ENCODE measurements at regions of chr19 and their contacts with region 1.

Region 1: DNA sequence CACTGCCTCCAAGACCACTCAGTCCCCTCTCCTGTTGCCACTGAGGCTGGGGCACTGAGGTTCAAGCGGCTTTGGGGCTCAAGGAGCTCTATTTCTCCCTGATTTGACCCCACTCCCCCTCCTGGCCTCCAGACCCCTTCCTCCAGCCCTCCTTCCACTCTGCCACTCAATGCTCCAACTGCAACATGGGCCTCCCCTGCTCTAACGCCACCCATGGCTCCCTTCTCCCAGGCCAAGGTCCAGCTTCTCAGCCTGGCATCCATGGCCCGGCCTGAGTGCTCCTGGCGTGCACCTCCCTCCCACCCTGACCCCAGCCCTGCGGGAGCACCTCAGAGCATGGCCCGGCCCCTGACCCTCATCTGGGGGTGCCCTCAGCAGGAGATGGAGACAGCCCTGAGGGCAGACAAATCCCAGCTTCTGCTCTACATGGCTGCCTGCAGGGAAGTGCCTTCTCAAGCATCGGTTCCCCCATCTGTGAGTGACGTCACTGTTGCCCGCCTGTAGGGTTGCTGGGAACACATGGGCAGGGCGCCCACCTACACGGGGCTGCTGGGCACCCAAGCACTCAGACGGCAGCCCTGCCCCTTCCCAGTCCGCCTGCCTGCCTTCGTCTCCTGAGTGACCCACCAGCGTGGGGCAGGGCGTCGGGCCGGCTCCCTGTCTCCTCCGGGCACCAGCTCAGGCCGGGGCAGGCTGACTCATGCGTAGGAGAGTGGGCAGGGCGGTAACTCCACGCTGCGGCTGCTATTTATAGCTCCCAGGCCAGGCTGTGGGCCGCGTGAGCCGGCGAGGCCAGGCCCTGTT is 1.6 kb upstream of the DIRAS1 start:
- DNase-seq: peak; percentile 89

Region 2: GRCh38 chr19:2663920-2664571 is 58.7 kb before region 1 on chr19:
- intact Hi-C with region 1: loop called (anchors 2 kb)
- DNase-seq: peak; percentile 86

Region 3: DNA sequence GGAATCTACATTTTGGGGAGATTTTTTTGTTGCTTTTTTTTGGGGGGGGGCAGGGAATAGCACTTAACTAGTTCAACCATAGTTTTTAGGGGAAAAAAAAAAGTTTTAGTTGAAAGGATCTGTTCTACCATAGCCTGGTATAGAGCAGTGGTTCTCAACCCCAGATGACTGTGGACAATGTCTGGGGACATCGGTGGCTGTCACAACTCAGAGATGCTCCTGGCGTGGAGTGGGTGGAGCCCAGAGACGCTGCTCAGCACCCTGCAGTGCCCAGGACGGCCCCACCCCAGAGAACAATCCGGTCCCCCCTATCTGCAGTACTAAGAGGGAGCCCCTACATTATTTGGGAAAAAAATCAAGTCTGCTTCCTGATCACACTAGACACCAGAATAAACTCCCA is 28.5 kb before region 1 on chr19:
- intact Hi-C with region 1: loop called (anchors 2 kb)
- DNase-seq: no peak

Region 4: DNA sequence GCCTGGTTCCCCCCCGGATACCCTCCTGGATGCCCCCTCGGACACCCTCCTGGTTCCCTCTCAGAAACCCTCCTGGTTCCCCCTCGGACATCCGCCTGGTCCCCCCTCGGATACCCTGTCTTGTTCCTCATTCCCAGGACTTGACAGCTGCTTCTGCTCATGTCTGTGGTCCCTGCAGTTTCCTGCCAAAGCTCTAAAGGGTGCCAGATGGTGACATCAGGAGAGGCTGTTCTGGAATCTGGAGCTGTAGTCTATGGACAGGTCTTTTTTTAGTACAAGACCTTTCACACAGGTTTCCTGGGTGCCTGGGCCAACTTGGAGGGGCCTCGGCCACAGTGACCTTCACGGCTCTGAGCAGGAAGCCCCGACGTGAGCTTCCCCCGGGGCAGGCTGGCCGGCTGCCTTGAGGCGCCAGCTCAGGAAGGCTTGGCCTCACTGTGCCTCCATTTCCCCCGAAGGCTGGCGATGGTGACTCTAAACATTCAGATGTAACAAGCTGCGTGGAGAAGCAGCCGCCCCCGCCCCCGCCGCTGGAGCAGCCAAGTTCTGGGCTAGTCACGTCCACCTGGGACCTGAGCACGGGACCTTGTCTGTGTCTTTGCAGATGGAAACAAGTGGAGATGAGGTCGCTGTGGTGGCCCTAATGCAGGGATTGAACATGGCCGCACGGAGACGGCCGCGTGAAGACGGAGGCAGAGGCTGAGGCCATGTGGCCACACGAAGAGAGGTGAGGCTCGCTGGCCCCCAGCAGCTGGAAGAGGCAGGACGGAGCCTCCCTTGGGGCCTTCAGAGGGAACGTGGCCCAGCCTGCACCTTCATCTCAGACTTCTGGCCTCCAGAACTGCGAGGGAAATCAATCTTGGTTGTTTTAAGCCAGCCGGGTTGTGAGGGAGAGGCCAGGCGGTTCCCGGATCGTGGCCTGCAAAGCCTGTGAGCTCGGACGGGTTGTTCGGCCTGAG is 47.6 kb after region 1 on chr19:
- intact Hi-C with region 1: loop called (anchors 5 kb)
- DNase-seq: peak; percentile 81